ENCODE measurements at regions of chr1 and their contacts with region 1.

Region 1: GRCh38 chr1:156728597-156729462 is at the start of gene ISG20L2:
- DNase-seq: peak; percentile 83 to 100 (median 91)
- ATAC-seq: peak; percentile 93
- H3K4me3 ChIP-seq: peak within 1 kb of the TSS; percentile 80 to 96
- H3K4me3 Mint-ChIP-seq: no peak within 1 kb of the TSS
- H3K27ac ChIP-seq: peak within 1 kb of the TSS; percentile 88 to 99
- H3K27ac Mint-ChIP-seq: peak within 1 kb of the TSS; percentile 95
- H3K4me1 ChIP-seq: peaks cover 41% of the 10 kb centered on the region
- H3K4me1 Mint-ChIP-seq: peaks cover 24% of the 10 kb centered on the region
- H3K27me3 ChIP-seq: no peaks in the 10 kb centered on the region
- H3K27me3 Mint-ChIP-seq: no peaks in the 10 kb centered on the region
- CTCF ChIP-seq: no peak
- total RNA-seq, gene ISG20L2: 54.5 to 63.5 TPM

Region 2: GRCh38 chr1:156625436-156626078 is 103.3 kb before region 1 on chr1:
- CTCF ChIA-PET with region 1: interaction called, 41 read pairs
- POLR2A ChIA-PET with region 1: no interaction called
- intact Hi-C with region 1: loop called in 1 of 2 experiments (anchors 1 kb)
- DNase-seq: peak; percentile 37 to 82 (median 70)
- ATAC-seq: peak; percentile 77
- H3K4me3 ChIP-seq: peak overlapping the region; percentile 26 to 46
- H3K4me3 Mint-ChIP-seq: peak overlapping the region; percentile 75
- H3K27ac ChIP-seq: no peak overlapping the region
- H3K27ac Mint-ChIP-seq: no peak overlapping the region
- H3K4me1 ChIP-seq: peaks cover 23% of the 10 kb centered on the region
- H3K4me1 Mint-ChIP-seq: peaks cover 14% of the 10 kb centered on the region
- H3K27me3 ChIP-seq: peaks cover 26 to 33% of the 10 kb centered on the region in 2 experiments
- H3K27me3 Mint-ChIP-seq: peaks cover 53% of the 10 kb centered on the region
- CTCF ChIP-seq: peak; percentile 83

Region 3: GRCh38 chr1:156697481-156697880 is 31.3 kb before region 1 on chr1:
- CTCF ChIA-PET with region 1: interaction called, 997 read pairs
- POLR2A ChIA-PET with region 1: no interaction called
- intact Hi-C with region 1: no loop called
- DNase-seq: no peak
- ATAC-seq: no peak
- H3K4me3 ChIP-seq: no peak overlapping the region
- H3K4me3 Mint-ChIP-seq: no peak overlapping the region
- H3K27ac ChIP-seq: no peak overlapping the region
- H3K27ac Mint-ChIP-seq: no peak overlapping the region
- H3K4me1 ChIP-seq: peaks cover 17% of the 10 kb centered on the region
- H3K4me1 Mint-ChIP-seq: peaks cover 18% of the 10 kb centered on the region
- H3K27me3 ChIP-seq: peaks cover 6 to 21% of the 10 kb centered on the region in 2 experiments
- H3K27me3 Mint-ChIP-seq: peaks cover 48% of the 10 kb centered on the region
- CTCF ChIP-seq: no peak

Region 4: DNA sequence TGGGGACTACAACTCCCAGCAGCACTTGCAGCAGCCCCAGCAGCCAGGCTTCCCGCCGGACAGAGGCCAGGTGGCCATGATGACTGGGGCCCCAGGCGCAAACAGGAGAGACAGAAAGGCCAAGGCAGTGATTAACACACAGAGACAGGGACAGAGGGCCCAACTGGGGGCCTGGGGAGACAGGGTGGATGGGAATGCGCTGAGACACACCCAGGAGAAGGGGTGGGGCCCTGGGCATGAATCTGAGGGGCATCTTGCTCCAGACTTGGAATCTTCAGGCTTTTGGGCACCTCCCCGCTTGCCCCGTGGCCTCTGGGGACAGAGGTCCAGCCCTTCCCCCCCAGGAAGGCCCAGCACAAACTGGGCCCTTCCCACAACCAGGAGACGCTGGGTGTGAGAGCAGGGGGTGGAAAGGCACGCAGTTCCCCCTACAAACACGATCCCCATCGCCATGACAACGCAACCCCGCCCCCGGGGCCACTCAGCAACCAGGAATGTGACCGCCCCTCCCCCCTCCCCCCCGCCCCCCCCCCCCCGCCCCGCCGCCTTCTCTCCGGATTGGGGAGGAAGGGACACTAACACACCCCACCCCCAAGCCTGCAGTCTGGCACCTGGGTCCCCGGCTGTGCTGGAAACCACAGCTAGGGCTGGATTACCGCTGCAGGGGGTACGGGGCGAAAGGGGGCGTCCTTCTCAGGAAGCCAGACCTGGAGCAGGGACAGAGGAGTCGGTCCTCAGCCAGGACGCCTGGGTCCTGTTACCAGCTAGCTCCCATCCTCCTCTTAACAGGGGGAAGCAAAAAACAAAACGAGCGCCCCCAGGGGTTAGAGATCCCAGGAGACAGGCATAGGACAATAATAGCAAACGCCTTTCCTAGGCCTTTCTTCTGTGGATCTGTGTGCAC is 18.1 kb after region 1 on chr1:
- CTCF ChIA-PET with region 1: interaction called, 15 read pairs
- POLR2A ChIA-PET with region 1: interaction called, 44 read pairs
- intact Hi-C with region 1: loop called (anchors 1 kb)
- DNase-seq: peak in 8 of 9 experiments; percentile 21 to 88 (median 72)
- ATAC-seq: peak; percentile 12
- H3K4me3 ChIP-seq: peak overlapping the region; percentile 38 to 39
- H3K4me3 Mint-ChIP-seq: peak overlapping the region; percentile 92
- H3K27ac ChIP-seq: peak overlapping the region; percentile 60 to 84
- H3K27ac Mint-ChIP-seq: peak overlapping the region; percentile 95
- H3K4me1 ChIP-seq: peaks cover 49% of the 10 kb centered on the region
- H3K4me1 Mint-ChIP-seq: peaks cover 52% of the 10 kb centered on the region
- H3K27me3 ChIP-seq: no peaks in the 10 kb centered on the region
- H3K27me3 Mint-ChIP-seq: no peaks in the 10 kb centered on the region
- CTCF ChIP-seq: no peak

Region 5: GRCh38 chr1:156773607-156774006 is 44.8 kb after region 1 on chr1:
- CTCF ChIA-PET with region 1: interaction called, 18 read pairs
- POLR2A ChIA-PET with region 1: no interaction called
- intact Hi-C with region 1: no loop called
- DNase-seq: no peak
- ATAC-seq: peak; percentile 55
- H3K4me3 ChIP-seq: no peak overlapping the region
- H3K4me3 Mint-ChIP-seq: no peak overlapping the region
- H3K27ac ChIP-seq: no peak overlapping the region
- H3K27ac Mint-ChIP-seq: no peak overlapping the region
- H3K4me1 ChIP-seq: peaks cover 37% of the 10 kb centered on the region
- H3K4me1 Mint-ChIP-seq: peaks cover 73% of the 10 kb centered on the region
- H3K27me3 ChIP-seq: no peaks in the 10 kb centered on the region
- H3K27me3 Mint-ChIP-seq: no peaks in the 10 kb centered on the region
- CTCF ChIP-seq: peak; percentile 27

Region 6: GRCh38 chr1:156860113-156860627 is 131.3 kb after region 1 on chr1:
- CTCF ChIA-PET with region 1: interaction called, 38 read pairs
- POLR2A ChIA-PET with region 1: no interaction called
- intact Hi-C with region 1: loop called (anchors 1 kb)
- DNase-seq: peak in 8 of 9 experiments; percentile 47 to 78 (median 63)
- ATAC-seq: peak; percentile 70
- H3K4me3 ChIP-seq: peak overlapping the region; percentile 54 to 73
- H3K4me3 Mint-ChIP-seq: peak overlapping the region; percentile 77
- H3K27ac ChIP-seq: no peak overlapping the region
- H3K27ac Mint-ChIP-seq: peak overlapping the region; percentile 14
- H3K4me1 ChIP-seq: peaks cover 27% of the 10 kb centered on the region
- H3K4me1 Mint-ChIP-seq: peaks cover 25% of the 10 kb centered on the region
- H3K27me3 ChIP-seq: peaks cover 42 to 44% of the 10 kb centered on the region in 2 experiments
- H3K27me3 Mint-ChIP-seq: peaks cover 51% of the 10 kb centered on the region
- CTCF ChIP-seq: peak; percentile 79